Mucosa of descending colon (tissue), 3 donors: ENCODE measurements at regions of chr6 and their contacts with region 1.

Region 1: DNA sequence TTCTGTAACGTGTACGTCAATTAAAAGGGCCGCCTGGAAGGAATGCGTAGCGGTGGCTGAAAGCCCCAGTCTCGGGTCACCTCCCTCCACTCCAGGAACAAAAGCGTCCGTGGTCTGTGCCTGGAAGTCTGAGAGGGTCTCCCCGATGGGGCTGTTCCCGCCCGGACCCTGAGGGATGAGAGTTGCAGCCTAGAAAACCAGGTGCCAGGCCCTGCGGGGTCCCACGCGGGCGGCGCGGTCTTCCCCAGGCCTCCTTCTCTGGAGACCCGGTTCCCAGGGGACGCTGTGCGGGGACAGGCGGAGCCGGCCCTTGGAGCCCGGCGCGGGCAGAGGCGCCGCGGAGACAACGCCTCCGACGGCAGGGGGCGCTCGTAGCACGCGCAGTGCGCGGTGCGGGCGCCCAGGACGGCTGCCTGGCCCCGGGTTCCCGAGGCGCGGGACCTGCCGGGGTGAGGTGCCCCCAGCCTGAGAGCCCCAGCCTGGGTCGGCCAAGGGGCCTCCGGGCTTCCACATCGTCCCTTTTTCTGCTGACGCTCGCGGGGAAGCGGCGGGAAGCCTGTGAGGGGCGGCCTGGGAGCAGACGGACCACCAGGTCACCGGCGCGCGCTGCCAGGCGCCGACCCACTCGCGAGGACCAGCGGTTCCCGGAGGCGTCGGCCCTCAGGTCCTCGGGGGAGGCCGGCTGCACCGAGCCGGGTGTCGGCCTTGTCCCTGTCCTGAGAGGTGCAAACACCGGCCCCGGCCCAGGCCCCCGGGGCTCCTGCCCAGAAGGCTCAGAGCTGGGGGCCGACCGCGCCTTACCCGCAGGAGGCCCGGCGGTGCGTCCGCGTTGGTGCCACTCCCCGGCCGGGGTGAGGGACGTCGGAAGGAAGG is 5.3 kb upstream of the FOXC1 start:
- DNase-seq: peak; percentile 64 to 83 (median 71)
- ATAC-seq: peak; percentile 92
- H3K4me3 ChIP-seq: no peak overlapping the region
- H3K4me1 ChIP-seq: peaks cover 24% of the 10 kb centered on the region
- CTCF ChIP-seq: peak; percentile 95

Region 2: DNA sequence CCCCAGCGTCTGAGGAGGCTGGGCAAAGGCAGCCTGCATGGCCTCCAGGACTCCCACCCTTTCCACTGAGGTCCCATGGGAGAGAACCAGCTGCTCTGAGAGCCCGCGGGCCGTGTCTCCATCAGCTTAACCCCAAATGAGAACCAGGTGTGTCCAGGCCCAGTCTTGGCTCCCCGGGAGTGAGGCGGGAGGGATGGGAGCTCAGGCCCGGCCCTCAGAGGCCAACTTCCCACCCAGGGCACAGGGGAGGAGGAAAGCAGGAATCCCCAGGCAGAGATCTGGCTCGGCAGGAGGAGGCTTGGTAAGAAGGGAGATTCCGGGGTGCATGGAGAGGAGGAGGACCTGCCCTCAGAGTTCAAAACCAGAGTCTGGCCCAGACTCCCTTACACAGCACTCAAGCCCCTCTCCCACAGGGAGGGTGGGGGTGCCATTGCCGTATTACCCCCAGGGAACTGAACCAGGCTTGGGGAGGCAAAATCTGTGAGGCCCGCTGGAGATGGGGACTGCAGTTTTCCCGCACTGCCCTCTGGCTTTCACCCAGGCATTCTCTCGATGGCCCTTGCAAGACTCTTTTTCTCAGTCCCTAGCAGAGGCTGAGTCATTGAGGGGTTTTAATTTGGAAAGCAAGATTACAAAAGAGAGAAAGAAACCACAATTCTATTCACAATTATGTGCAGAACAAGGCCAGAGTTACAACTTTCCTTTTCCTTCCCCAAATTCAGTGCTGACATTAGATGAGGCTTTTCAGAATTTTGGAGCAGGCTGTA is 197.9 kb before region 1 on chr6:
- intact Hi-C with region 1: no loop called
- DNase-seq: no peak
- ATAC-seq: no peak
- H3K4me3 ChIP-seq: no peak overlapping the region
- H3K4me1 ChIP-seq: no peaks in the 10 kb centered on the region
- CTCF ChIP-seq: no peak

Region 3: DNA sequence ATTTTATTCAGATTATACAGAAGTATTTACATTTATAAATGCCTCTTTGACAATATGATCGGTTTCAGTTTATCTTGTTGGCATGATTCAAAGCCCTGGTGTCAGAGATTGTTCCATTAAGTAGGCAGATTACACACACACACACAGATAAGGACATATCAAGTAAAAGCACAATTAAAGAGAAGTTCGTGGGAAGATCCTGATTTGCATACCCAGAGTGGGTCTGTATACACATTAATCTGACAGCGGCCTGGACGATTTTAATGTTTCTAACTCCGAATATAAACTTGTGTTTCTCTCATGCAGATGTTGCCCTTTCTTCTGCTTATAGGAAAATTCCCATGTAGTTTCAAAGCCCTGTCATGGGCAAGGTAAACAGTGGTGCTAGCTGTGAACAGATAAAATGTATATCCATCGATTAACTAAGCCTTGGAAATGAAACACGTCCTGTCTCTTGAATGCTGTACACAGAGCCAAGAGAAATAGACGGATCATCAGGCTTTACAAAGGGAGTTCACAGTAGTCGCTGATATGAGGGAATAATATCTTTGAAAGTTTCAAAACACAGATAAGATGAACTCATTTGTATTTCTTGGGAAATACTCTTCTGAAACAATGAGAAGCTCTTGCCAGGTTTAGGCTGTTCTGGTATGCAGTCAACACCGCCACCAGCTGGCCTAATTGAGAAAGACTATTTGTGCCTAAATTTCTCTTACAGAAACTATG is 749.2 kb after region 1 on chr6:
- intact Hi-C with region 1: loop called (anchors 5 to 10 kb)
- DNase-seq: peak in 2 of 3 donors; percentile 63 to 88
- ATAC-seq: peak; percentile 81
- H3K4me3 ChIP-seq: no peak overlapping the region
- H3K4me1 ChIP-seq: no peaks in the 10 kb centered on the region
- CTCF ChIP-seq: peak; percentile 51